ENCODE measurements at regions of chr12 and their contacts with region 1.

Region 1: GRCh38 chr12:14417715-14418114 is 52.2 kb downstream of the ATF7IP start:
- DNase-seq: peak in 8 of 9 donors; percentile 26 to 88 (median 82)
- ATAC-seq: peak; percentile 80
- H3K4me3 ChIP-seq: no peak overlapping the region
- H3K4me3 Mint-ChIP-seq: peak overlapping the region; percentile 73 to 88 (median 83)
- H3K27ac ChIP-seq: peak overlapping the region; percentile 58
- H3K27ac Mint-ChIP-seq: peak overlapping the region; percentile 76 to 94 (median 87)
- H3K4me1 ChIP-seq: peaks cover 37 to 50% of the 10 kb centered on the region in 2 donors
- H3K4me1 Mint-ChIP-seq: peaks cover 40 to 85% (median 76%) of the 10 kb centered on the region in 7 donors
- H3K27me3 ChIP-seq: no peaks in the 10 kb centered on the region
- H3K27me3 Mint-ChIP-seq: no peaks in the 10 kb centered on the region

Region 2: DNA sequence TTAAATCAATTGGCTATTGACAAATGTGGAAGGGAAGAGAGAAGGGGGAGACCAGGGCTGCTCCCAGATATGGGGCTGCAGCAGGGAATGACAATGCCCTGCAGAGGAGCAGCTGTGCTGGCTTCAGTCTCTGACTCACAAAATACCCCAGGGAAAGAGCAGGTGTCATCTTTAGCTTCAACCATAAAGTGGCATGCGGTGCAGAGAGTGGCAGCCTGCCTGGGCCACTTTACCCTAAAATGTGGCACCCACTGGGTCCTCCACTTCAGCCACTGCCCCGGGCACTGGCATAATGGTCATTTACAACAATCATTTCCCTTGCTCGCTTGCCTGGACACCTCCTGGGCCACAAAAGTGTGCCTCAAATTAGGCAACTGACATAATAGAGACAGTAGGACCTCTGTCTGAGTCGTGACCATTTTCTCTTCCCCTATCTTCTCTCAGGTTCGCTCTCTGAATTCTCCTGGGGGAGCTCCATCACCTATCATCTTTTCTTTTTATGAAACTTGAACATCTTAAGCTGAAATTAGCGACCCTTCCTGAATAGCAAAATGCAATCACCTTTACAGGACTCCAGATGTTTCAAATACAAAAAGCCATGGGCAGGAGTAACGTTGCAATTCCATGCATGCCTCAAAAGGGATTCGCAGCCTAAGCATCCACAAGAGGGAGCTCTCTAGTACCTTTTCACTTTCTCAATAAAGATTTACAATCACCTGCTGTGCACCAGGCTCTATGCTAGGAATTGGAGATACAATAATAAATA is 232.1 kb before region 1 on chr12:
- CTCF ChIA-PET with region 1: interaction called, 3 read pairs
- POLR2A ChIA-PET with region 1: no interaction called
- intact Hi-C with region 1: loop called in 1 of 2 experiments (anchors 1 kb)
- DNase-seq: peak in 4 of 9 donors; percentile 9 to 29 (median 18)
- ATAC-seq: peak; percentile 54
- H3K4me3 ChIP-seq: no peak overlapping the region
- H3K4me3 Mint-ChIP-seq: no peak overlapping the region
- H3K27ac ChIP-seq: no peak overlapping the region
- H3K27ac Mint-ChIP-seq: no peak overlapping the region
- H3K4me1 ChIP-seq: no peaks in the 10 kb centered on the region
- H3K4me1 Mint-ChIP-seq: no peaks in the 10 kb centered on the region
- H3K27me3 ChIP-seq: no peaks in the 10 kb centered on the region
- H3K27me3 Mint-ChIP-seq: peaks cover 0 to 16% (median 7%) of the 10 kb centered on the region in 5 donors

Region 3: DNA sequence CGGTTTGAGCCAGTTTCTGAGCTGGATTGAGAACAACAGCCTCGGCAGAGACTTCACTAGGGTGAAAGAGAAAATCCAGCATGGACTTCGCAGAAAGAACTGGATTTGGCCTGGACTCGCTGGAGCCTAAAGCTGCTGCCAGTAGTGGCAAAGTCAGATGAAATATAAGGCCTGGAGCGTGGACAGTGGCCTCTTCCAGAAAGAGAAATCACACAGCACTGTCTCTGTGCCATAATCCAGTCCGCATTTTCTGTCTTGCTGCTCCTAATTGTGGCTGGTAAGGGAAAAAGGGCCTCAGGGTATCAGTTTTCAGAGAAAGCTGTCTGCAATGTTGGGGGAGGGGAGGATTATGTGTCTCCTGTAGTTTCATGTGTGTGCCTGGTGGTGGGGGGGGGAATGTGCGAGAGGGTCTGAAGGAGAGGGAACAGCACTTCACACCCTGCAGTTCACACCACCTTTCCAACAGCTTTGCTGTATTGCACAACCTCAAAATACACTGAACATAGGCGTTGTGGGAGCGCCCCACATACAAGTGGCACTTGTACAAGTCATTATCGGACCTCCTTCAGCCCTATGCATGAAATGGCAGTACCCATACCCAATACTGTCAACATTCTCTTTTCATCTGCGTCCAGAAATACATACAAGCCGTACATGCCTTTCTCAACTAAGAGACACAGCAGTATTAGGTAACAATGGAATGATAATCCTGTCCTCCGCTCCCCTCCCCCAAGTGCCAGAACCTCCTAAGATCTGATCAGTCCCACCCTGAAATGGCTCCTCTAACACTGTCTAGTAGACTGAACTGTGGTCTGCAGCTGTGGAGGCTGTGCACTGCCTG is 159.8 kb before region 1 on chr12:
- CTCF ChIA-PET with region 1: interaction called, 13 read pairs
- POLR2A ChIA-PET with region 1: interaction called, 5 read pairs
- intact Hi-C with region 1: loop called (anchors 1 kb)
- DNase-seq: peak; percentile 49 to 85 (median 79)
- ATAC-seq: peak; percentile 72
- H3K4me3 ChIP-seq: peak overlapping the region; percentile 31
- H3K4me3 Mint-ChIP-seq: peak overlapping the region; percentile 67 to 81 (median 77)
- H3K27ac ChIP-seq: peak overlapping the region; percentile 65
- H3K27ac Mint-ChIP-seq: peak overlapping the region; percentile 89 to 99 (median 98)
- H3K4me1 ChIP-seq: peaks cover 37 to 38% of the 10 kb centered on the region in 2 donors
- H3K4me1 Mint-ChIP-seq: peaks cover 39 to 66% (median 61%) of the 10 kb centered on the region in 7 donors
- H3K27me3 ChIP-seq: no peaks in the 10 kb centered on the region
- H3K27me3 Mint-ChIP-seq: no peaks in the 10 kb centered on the region

Region 4: GRCh38 chr12:14394317-14395073 is 23.2 kb before region 1 on chr12:
- CTCF ChIA-PET with region 1: interaction called, 9 read pairs
- POLR2A ChIA-PET with region 1: interaction called, 8 read pairs
- intact Hi-C with region 1: loop called (anchors 1 kb)
- DNase-seq: peak in 7 of 9 donors; percentile 57 to 82 (median 71)
- ATAC-seq: peak; percentile 86
- H3K4me3 ChIP-seq: peak overlapping the region; percentile 33
- H3K4me3 Mint-ChIP-seq: peak overlapping the region; percentile 49 to 87 (median 76)
- H3K27ac ChIP-seq: peak overlapping the region; percentile 75
- H3K27ac Mint-ChIP-seq: peak overlapping the region; percentile 83 to 97 (median 95)
- H3K4me1 ChIP-seq: peaks cover 62 to 84% of the 10 kb centered on the region in 2 donors
- H3K4me1 Mint-ChIP-seq: peaks cover 47 to 99% (median 91%) of the 10 kb centered on the region in 7 donors
- H3K27me3 ChIP-seq: no peaks in the 10 kb centered on the region
- H3K27me3 Mint-ChIP-seq: no peaks in the 10 kb centered on the region

Region 5: DNA sequence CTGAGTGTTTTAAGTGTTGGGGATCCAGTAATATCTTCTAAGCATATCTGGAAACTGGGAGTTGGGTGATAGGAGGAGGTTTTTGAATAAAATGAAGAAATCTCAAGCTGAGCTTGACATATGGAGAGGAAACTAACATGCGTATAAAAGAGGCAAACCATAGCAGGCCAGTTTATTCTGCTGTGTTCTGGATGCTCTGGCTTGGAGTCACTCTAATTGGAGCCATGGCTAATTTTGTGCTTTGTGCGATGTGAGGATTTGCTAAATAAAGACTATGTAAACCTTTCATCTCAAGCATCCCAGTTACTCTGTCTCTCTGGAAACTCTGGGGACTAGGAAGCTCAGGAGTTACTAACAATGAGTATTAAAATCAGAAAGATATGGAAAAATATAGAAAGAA is 14.3 kb after region 1 on chr12:
- CTCF ChIA-PET with region 1: interaction called, 3 read pairs
- POLR2A ChIA-PET with region 1: interaction called, 3 read pairs
- intact Hi-C with region 1: loop called in 1 of 2 experiments (anchors 2 kb)
- DNase-seq: no peak
- ATAC-seq: no peak
- H3K4me3 ChIP-seq: no peak overlapping the region
- H3K4me3 Mint-ChIP-seq: peak overlapping the region in 7 of 10 donors; percentile 5 to 56 (median 25)
- H3K27ac ChIP-seq: no peak overlapping the region
- H3K27ac Mint-ChIP-seq: peak overlapping the region in 7 of 9 donors; percentile 14 to 70 (median 46)
- H3K4me1 ChIP-seq: peaks cover 22 to 42% of the 10 kb centered on the region in 2 donors
- H3K4me1 Mint-ChIP-seq: peaks cover 46 to 77% (median 63%) of the 10 kb centered on the region in 7 donors
- H3K27me3 ChIP-seq: no peaks in the 10 kb centered on the region
- H3K27me3 Mint-ChIP-seq: no peaks in the 10 kb centered on the region

Region 6: GRCh38 chr12:14618983-14619382 is 201.3 kb after region 1 on chr12:
- CTCF ChIA-PET with region 1: no interaction called
- POLR2A ChIA-PET with region 1: no interaction called
- intact Hi-C with region 1: loop called in 1 of 2 experiments (anchors 2 kb)
- DNase-seq: peak in 3 of 9 donors; percentile 3 to 19 (median 10)
- ATAC-seq: no peak
- H3K4me3 ChIP-seq: no peak overlapping the region
- H3K4me3 Mint-ChIP-seq: peak overlapping the region in 1 of 10 donors; percentile 19
- H3K27ac ChIP-seq: no peak overlapping the region
- H3K27ac Mint-ChIP-seq: no peak overlapping the region
- H3K4me1 ChIP-seq: no peaks in the 10 kb centered on the region
- H3K4me1 Mint-ChIP-seq: peaks cover 0 to 4% (median 0%) of the 10 kb centered on the region in 7 donors
- H3K27me3 ChIP-seq: no peaks in the 10 kb centered on the region
- H3K27me3 Mint-ChIP-seq: peaks cover 2 to 22% (median 21%) of the 10 kb centered on the region in 5 donors

Region 7: GRCh38 chr12:14716848-14717444 is 299.2 kb after region 1 on chr12:
- CTCF ChIA-PET with region 1: interaction called, 4 read pairs
- POLR2A ChIA-PET with region 1: no interaction called
- intact Hi-C with region 1: loop called in 1 of 2 experiments (anchors 2 kb)
- DNase-seq: peak; percentile 13 to 57 (median 45)
- ATAC-seq: peak; percentile 76
- H3K4me3 ChIP-seq: no peak overlapping the region
- H3K4me3 Mint-ChIP-seq: no peak overlapping the region
- H3K27ac ChIP-seq: no peak overlapping the region
- H3K27ac Mint-ChIP-seq: no peak overlapping the region
- H3K4me1 ChIP-seq: no peaks in the 10 kb centered on the region
- H3K4me1 Mint-ChIP-seq: peaks cover 0 to 6% (median 0%) of the 10 kb centered on the region in 7 donors
- H3K27me3 ChIP-seq: no peaks in the 10 kb centered on the region
- H3K27me3 Mint-ChIP-seq: peaks cover 0 to 23% (median 0%) of the 10 kb centered on the region in 5 donors